MCF 10A (cell line): ENCODE measurements at regions of chr20 and their contacts with region 1.

Region 1: GRCh38 chr20:54093423-54094267 is 23.3 kb upstream of the BCAS1 start:
- DNase-seq: no peak
- H3K4me3 Mint-ChIP-seq: no peak overlapping the region
- H3K27ac Mint-ChIP-seq: no peak overlapping the region
- H3K4me1 Mint-ChIP-seq: no peaks in the 10 kb centered on the region
- H3K27me3 Mint-ChIP-seq: no peaks in the 10 kb centered on the region
- CTCF ChIP-seq: no peak

Region 2: GRCh38 chr20:54062812-54063280 is 30.8 kb before region 1 on chr20:
- CTCF ChIA-PET with region 1: interaction called, 18 read pairs
- POLR2A ChIA-PET with region 1: no interaction called
- intact Hi-C with region 1: no loop called
- DNase-seq: peak; percentile 64
- H3K4me3 Mint-ChIP-seq: no peak overlapping the region
- H3K27ac Mint-ChIP-seq: no peak overlapping the region
- H3K4me1 Mint-ChIP-seq: peaks cover 21% of the 10 kb centered on the region
- H3K27me3 Mint-ChIP-seq: no peaks in the 10 kb centered on the region
- CTCF ChIP-seq: peak; percentile 59

Region 3: GRCh38 chr20:54123587-54124180 is 30.0 kb after region 1 on chr20:
- CTCF ChIA-PET with region 1: interaction called, 22 read pairs
- POLR2A ChIA-PET with region 1: interaction called, 4 read pairs
- intact Hi-C with region 1: no loop called
- DNase-seq: peak; percentile 99
- H3K4me3 Mint-ChIP-seq: peak overlapping the region; percentile 45
- H3K27ac Mint-ChIP-seq: peak overlapping the region; percentile 96
- H3K4me1 Mint-ChIP-seq: peaks cover 37% of the 10 kb centered on the region
- H3K27me3 Mint-ChIP-seq: no peaks in the 10 kb centered on the region
- CTCF ChIP-seq: no peak

Region 4: GRCh38 chr20:54148947-54149503 is 55.4 kb after region 1 on chr20:
- CTCF ChIA-PET with region 1: interaction called, 11 read pairs
- POLR2A ChIA-PET with region 1: no interaction called
- intact Hi-C with region 1: no loop called
- DNase-seq: peak; percentile 35
- H3K4me3 Mint-ChIP-seq: no peak overlapping the region
- H3K27ac Mint-ChIP-seq: no peak overlapping the region
- H3K4me1 Mint-ChIP-seq: peaks cover 6% of the 10 kb centered on the region
- H3K27me3 Mint-ChIP-seq: no peaks in the 10 kb centered on the region
- CTCF ChIP-seq: no peak

Region 5: GRCh38 chr20:54173653-54174456 is 80.2 kb after region 1 on chr20 and contains the start of gene CYP24A1:
- CTCF ChIA-PET with region 1: interaction called, 20 read pairs
- POLR2A ChIA-PET with region 1: interaction called, 3 read pairs
- intact Hi-C with region 1: no loop called
- DNase-seq: peak; percentile 41
- H3K4me3 Mint-ChIP-seq: peak within 1 kb of the TSS; percentile 67
- H3K27ac Mint-ChIP-seq: no peak within 1 kb of the TSS
- H3K4me1 Mint-ChIP-seq: peaks cover 20% of the 10 kb centered on the region
- H3K27me3 Mint-ChIP-seq: no peaks in the 10 kb centered on the region
- CTCF ChIP-seq: no peak
- total RNA-seq, gene CYP24A1: 0.28 and 0.34 TPM in 2 replicates

Region 6: GRCh38 chr20:54214566-54214965 is 120.9 kb after region 1 on chr20:
- CTCF ChIA-PET with region 1: interaction called, 1,436 read pairs
- POLR2A ChIA-PET with region 1: no interaction called
- intact Hi-C with region 1: no loop called
- DNase-seq: no peak
- H3K4me3 Mint-ChIP-seq: no peak overlapping the region
- H3K27ac Mint-ChIP-seq: no peak overlapping the region
- H3K4me1 Mint-ChIP-seq: peaks cover 6% of the 10 kb centered on the region
- H3K27me3 Mint-ChIP-seq: no peaks in the 10 kb centered on the region
- CTCF ChIP-seq: no peak